Calu3 (cell line): ENCODE measurements at regions of chr11 and their contacts with region 1.

Region 1: GRCh38 chr11:102157219-102157618 is 47.0 kb downstream of the YAP1 start:
- DNase-seq: peak; percentile 37
- H3K4me3 Mint-ChIP-seq: no peak overlapping the region
- H3K27ac Mint-ChIP-seq: no peak overlapping the region
- H3K4me1 Mint-ChIP-seq: peaks cover 39% of the 10 kb centered on the region
- H3K27me3 Mint-ChIP-seq: no peaks in the 10 kb centered on the region
- CTCF ChIP-seq: no peak

Region 2: GRCh38 chr11:102007567-102008437 is 149.4 kb before region 1 on chr11:
- CTCF ChIA-PET with region 1: no interaction called
- intact Hi-C with region 1: no loop called
- DNase-seq: peak; percentile 44
- H3K4me3 Mint-ChIP-seq: no peak overlapping the region
- H3K27ac Mint-ChIP-seq: peak overlapping the region; percentile 48
- H3K4me1 Mint-ChIP-seq: peaks cover 28% of the 10 kb centered on the region
- H3K27me3 Mint-ChIP-seq: no peaks in the 10 kb centered on the region
- CTCF ChIP-seq: peak; percentile 45

Region 3: GRCh38 chr11:102115557-102115956 is 41.7 kb before region 1 on chr11:
- CTCF ChIA-PET with region 1: no interaction called
- intact Hi-C with region 1: loop called (anchors 5 kb)
- DNase-seq: peak; percentile 30
- H3K4me3 Mint-ChIP-seq: peak overlapping the region; percentile 50
- H3K27ac Mint-ChIP-seq: peak overlapping the region; percentile 60
- H3K4me1 Mint-ChIP-seq: peaks cover 40% of the 10 kb centered on the region
- H3K27me3 Mint-ChIP-seq: no peaks in the 10 kb centered on the region
- CTCF ChIP-seq: no peak

Region 4: GRCh38 chr11:102171101-102171500 is 13.9 kb after region 1 on chr11:
- CTCF ChIA-PET with region 1: interaction called, 3 read pairs
- intact Hi-C with region 1: loop called (anchors 2 kb)
- DNase-seq: no peak
- H3K4me3 Mint-ChIP-seq: no peak overlapping the region
- H3K27ac Mint-ChIP-seq: peak overlapping the region; percentile 58
- H3K4me1 Mint-ChIP-seq: peaks cover 42% of the 10 kb centered on the region
- H3K27me3 Mint-ChIP-seq: no peaks in the 10 kb centered on the region
- CTCF ChIP-seq: no peak